ENCODE measurements at regions of chr11 and their contacts with region 1.

Region 1: GRCh38 chr11:18526521-18527296 is at the start of gene TSG101:
- DNase-seq: peak; percentile 94
- H3K4me3 Mint-ChIP-seq: peak within 1 kb of the TSS; percentile 95
- H3K27ac Mint-ChIP-seq: peak within 1 kb of the TSS; percentile 97
- H3K4me1 Mint-ChIP-seq: peaks cover 35% of the 10 kb centered on the region
- H3K27me3 Mint-ChIP-seq: no peaks in the 10 kb centered on the region
- CTCF ChIP-seq: no peak
- total RNA-seq, gene TSG101: 57.5 and 61.8 TPM in 2 replicates

Region 2: GRCh38 chr11:18243783-18244362 is 282.8 kb before region 1 on chr11:
- CTCF ChIA-PET with region 1: no interaction called
- intact Hi-C with region 1: loop called (anchors 10 kb)
- DNase-seq: peak; percentile 76
- H3K4me3 Mint-ChIP-seq: no peak overlapping the region
- H3K27ac Mint-ChIP-seq: no peak overlapping the region
- H3K4me1 Mint-ChIP-seq: peaks cover 21% of the 10 kb centered on the region
- H3K27me3 Mint-ChIP-seq: no peaks in the 10 kb centered on the region
- CTCF ChIP-seq: peak; percentile 83

Region 3: DNA sequence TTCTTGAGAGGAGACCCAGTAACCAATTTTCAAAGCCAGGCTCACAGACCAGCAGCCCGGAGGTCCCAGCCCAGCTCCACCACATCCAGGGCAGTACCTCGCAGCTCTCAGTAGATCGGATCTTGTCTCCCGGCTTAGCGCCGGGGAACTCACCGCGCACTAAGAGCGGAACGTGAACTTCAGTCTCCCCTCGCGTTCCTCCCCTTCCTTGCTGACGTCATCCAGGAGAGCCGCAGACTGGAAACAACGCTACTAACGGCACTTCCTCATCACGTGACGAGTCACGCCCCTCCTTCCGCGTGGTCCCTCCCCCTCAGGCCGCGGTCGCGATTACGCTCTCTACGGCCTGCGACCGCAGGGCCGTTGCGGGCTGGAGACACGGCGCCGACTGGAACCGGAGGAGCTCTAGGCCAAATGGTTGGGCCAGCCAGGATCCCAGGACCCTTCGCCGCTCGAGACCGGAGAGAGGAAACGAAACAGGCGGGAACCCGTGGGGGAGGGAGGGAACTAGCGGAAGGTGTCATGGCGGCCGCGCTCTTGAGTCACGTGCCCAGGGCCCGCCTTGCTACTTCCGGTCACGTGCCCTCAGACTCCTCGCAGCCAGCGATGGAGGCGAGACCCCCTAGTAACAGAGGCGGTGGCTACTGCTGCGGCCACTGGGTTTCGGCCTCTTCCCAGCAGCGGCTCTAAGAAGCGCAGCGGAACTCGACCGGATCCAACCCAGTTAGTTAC is 204.6 kb before region 1 on chr11 and contains the starts of genes GTF2H1 and HPS5:
- CTCF ChIA-PET with region 1: no interaction called
- intact Hi-C with region 1: loop called (anchors 10 kb)
- DNase-seq: peak; percentile 94
- H3K4me3 Mint-ChIP-seq: peak within 1 kb of the TSS; percentile 78
- H3K27ac Mint-ChIP-seq: peak within 1 kb of the TSS; percentile 99
- H3K4me1 Mint-ChIP-seq: peaks cover 62% of the 10 kb centered on the region
- H3K27me3 Mint-ChIP-seq: no peaks in the 10 kb centered on the region
- CTCF ChIP-seq: no peak
- total RNA-seq, gene GTF2H1: 43.0 and 44.3 TPM in 2 replicates
- total RNA-seq, gene HPS5: 25.2 and 26.4 TPM in 2 replicates

Region 4: DNA sequence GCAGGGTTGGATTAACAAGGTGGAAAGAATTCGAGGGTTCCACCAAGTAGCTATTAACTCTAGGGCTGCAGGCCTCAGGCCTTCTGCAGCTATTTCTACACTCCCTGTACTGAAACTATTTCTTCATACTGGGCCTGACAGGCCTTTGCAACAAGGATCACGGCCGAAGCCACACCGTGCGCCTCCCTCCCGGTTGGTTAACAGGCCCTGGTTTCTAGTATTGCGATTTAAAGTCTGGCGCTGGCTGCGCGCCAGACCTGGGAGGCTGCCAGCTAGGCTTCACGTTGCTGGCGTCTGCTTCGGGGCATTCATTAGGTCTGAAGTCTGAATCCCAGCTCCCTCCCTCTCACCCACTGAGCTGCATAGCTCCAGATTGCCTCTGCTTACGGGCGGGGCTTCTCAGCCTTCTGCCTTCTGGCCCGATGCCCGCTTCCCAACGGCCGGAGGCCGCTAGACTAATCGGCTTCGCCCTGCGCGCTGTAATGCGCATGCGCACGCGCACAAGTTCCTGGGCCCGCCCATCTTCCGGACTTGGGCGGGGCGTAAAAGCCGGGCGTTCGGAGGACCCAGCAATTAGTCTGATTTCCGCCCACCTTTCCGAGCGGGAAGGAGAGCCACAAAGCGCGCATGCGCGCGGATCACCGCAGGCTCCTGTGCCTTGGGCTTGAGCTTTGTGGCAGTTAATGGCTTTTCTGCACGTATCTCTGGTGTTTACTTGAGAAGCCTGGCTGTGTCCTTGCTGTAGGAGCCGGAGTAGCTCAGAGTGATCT is 130.8 kb before region 1 on chr11:
- CTCF ChIA-PET with region 1: no interaction called
- intact Hi-C with region 1: loop called (anchors 10 kb)
- DNase-seq: peak; percentile 98
- H3K4me3 Mint-ChIP-seq: peak overlapping the region; percentile 98
- H3K27ac Mint-ChIP-seq: peak overlapping the region; percentile 98
- H3K4me1 Mint-ChIP-seq: no peaks in the 10 kb centered on the region
- H3K27me3 Mint-ChIP-seq: no peaks in the 10 kb centered on the region
- CTCF ChIP-seq: no peak

Region 5: GRCh38 chr11:18492888-18493287 is 33.8 kb before region 1 on chr11:
- CTCF ChIA-PET with region 1: interaction called, 7 read pairs
- intact Hi-C with region 1: loop called (anchors 2 kb)
- DNase-seq: no peak
- H3K4me3 Mint-ChIP-seq: peak overlapping the region; percentile 33
- H3K27ac Mint-ChIP-seq: peak overlapping the region; percentile 19
- H3K4me1 Mint-ChIP-seq: peaks cover 45% of the 10 kb centered on the region
- H3K27me3 Mint-ChIP-seq: no peaks in the 10 kb centered on the region
- CTCF ChIP-seq: no peak

Region 6: DNA sequence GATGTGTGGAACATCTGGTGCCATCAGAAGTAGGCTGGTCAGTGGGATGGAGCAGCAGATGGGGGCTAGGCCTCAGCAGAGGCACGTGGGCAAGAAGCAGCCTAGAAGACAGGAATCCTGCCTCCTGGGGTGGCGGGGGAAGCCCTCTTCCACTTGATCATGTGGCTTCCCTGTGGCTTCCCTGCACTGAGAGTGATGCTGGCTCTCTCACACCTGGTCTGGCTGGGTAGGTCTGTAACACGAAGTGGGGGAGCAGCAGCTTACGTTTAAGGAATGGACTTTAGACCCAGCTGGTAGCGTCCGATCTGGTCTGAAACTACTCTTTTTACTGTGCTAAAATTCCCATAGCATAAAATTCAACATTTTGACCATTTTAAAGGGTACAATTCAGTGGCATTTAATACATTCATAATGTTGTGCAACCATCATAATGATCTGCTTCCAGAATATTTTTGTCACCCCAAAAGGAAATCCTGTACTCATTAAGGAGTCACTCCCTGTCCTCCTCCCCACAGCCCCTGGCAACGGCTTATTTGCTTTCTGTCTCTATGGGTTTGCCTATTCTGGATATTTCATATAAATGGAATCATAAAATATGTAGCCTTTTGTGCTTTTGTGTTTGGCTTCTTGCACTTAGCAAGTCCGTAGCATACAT is 243.2 kb after region 1 on chr11:
- CTCF ChIA-PET with region 1: no interaction called
- intact Hi-C with region 1: no loop called
- DNase-seq: peak; percentile 65
- H3K4me3 Mint-ChIP-seq: no peak overlapping the region
- H3K27ac Mint-ChIP-seq: peak overlapping the region; percentile 70
- H3K4me1 Mint-ChIP-seq: peaks cover 17% of the 10 kb centered on the region
- H3K27me3 Mint-ChIP-seq: peaks cover 28% of the 10 kb centered on the region
- CTCF ChIP-seq: no peak